PC-3 (cell line): ENCODE measurements at regions of chr10 and their contacts with region 1.

Region 1: DNA sequence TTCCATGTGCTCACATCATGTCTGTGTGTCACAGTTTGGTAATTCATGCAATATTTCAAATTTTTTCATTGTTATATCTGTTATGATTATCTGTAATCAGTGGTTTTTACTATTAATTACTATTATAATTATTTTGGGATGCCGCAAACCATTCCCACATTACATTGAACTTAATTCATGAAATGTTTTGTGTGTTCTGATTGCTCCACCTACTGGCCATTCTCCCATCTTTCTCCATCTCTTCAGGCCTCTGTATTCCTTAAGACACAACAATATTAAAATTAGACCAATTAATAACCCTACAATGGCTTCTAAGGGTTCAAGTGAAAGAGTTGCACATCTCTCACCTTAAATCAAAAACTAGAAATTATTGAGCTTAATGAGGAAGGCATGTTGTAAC is 398.5 kb downstream of the PCDH15 start:
- DNase-seq: peak; percentile 76
- ATAC-seq: peak; percentile 76
- H3K4me3 ChIP-seq: no peak overlapping the region
- H3K27ac ChIP-seq: no peak overlapping the region
- H3K4me1 ChIP-seq: no peaks in the 10 kb centered on the region
- H3K27me3 ChIP-seq: no peaks in the 10 kb centered on the region
- CTCF ChIP-seq: peak; percentile 92

Region 2: DNA sequence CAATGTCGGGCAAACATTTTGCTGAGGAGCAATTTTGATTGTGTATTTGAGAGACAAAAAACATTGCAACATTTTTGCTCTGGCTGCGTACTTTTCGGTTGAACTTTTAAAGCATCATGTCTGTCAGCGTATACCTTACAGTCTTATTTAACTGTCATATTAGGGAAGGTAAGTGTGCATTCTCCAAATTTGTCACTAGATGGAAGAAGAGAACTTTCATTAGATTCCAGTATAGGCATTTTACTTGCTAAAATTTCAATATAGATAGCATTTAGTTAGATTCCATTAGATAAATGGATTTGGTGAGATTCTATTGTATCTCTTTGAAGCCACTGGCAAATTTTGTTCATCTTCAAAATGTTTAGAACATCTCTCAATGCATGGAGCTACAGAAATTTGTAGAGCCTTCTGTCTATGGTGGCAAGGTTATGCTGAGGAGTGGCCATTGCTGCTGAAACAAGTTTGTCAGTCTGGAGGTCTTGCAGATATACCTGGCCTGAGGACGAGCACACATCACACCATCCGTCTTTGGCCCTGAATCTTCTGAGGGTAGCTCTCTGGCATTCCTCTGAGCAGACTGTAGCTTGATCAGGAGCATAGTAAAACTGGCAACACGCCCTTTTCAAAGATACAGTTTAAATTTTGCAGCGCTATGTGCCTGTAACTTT is 1192.5 kb before region 1 on chr10:
- CTCF ChIA-PET with region 1: no interaction called
- POLR2A ChIA-PET with region 1: no interaction called
- intact Hi-C with region 1: loop called (anchors 1 kb)
- DNase-seq: peak; percentile 97
- ATAC-seq: peak; percentile 96
- H3K4me3 ChIP-seq: no peak overlapping the region
- H3K27ac ChIP-seq: no peak overlapping the region
- H3K4me1 ChIP-seq: no peaks in the 10 kb centered on the region
- H3K27me3 ChIP-seq: no peaks in the 10 kb centered on the region
- CTCF ChIP-seq: peak; percentile 99

Region 3: GRCh38 chr10:53839440-53840039 is 563.0 kb before region 1 on chr10:
- CTCF ChIA-PET with region 1: no interaction called
- POLR2A ChIA-PET with region 1: no interaction called
- intact Hi-C with region 1: loop called (anchors 1 kb)
- DNase-seq: peak; percentile 78
- ATAC-seq: no peak
- H3K4me3 ChIP-seq: no peak overlapping the region
- H3K27ac ChIP-seq: no peak overlapping the region
- H3K4me1 ChIP-seq: peaks cover 9% of the 10 kb centered on the region; the same call in 1 of the 2 replicates
- H3K27me3 ChIP-seq: no peaks in the 10 kb centered on the region
- CTCF ChIP-seq: peak; percentile 71

Region 4: DNA sequence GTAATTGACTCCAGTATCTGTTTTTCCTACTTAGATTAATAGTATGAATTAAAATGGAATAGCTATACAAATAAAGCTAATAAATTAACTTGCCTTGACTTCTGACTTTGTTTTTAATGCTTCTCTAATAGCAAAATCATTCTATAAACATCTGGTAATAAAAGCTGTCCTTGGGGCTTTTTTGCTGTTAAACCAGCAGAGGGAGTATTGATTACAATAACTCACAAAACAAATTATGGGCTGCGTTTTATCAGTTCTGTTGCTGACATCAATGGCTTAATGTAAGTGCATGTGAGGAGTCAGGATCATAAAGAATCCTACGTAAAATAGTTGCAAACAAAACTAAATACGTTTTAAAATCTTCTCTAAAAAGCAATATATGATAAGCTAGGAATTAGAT is 269.4 kb before region 1 on chr10:
- CTCF ChIA-PET with region 1: interaction called, 3 read pairs
- POLR2A ChIA-PET with region 1: no interaction called
- intact Hi-C with region 1: loop called (anchors 1 kb)
- DNase-seq: peak; percentile 54
- ATAC-seq: peak; percentile 63
- H3K4me3 ChIP-seq: no peak overlapping the region
- H3K27ac ChIP-seq: no peak overlapping the region
- H3K4me1 ChIP-seq: no peaks in the 10 kb centered on the region
- H3K27me3 ChIP-seq: no peaks in the 10 kb centered on the region
- CTCF ChIP-seq: peak; percentile 91

Region 5: DNA sequence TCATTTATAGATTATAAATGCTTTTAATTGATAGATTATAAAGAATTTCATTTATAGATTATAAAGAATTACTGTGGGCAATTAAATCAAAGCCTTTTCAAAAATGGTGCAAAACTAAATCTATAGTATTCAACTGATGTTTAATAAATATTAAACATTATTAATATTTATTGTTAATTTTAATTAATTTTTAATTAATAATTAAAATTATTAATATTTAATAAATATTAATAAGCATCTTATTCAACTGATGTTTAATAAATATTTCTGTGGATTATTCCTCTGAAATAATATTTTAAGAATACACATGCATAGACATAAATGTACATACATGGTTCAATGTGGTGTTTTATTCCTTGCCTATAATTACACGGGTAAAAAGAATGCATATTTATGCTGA is 51.7 kb after region 1 on chr10:
- CTCF ChIA-PET with region 1: no interaction called
- POLR2A ChIA-PET with region 1: no interaction called
- intact Hi-C with region 1: no loop called
- DNase-seq: no peak
- ATAC-seq: no peak
- H3K4me3 ChIP-seq: no peak overlapping the region
- H3K27ac ChIP-seq: no peak overlapping the region
- H3K4me1 ChIP-seq: no peaks in the 10 kb centered on the region
- H3K27me3 ChIP-seq: no peaks in the 10 kb centered on the region
- CTCF ChIP-seq: no peak

Region 6: DNA sequence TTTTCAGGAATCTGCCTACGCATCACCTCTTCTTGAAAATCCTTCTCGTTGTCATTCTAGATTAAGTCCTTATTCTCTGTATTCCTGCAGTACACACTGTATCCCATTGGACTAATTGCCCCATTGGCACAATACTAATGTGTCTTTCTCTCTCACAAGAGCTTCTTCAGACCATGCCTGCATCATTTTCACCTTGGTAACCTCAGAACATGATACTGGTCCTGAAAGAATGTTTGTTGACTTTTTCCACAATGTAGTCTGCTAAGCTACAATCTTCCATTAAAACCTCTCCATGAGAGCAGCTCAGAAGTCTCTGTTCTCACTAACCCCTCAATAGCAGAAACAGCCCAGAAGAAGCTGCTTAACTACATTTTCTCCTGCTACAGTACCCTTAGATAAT is 127.7 kb after region 1 on chr10:
- CTCF ChIA-PET with region 1: no interaction called
- POLR2A ChIA-PET with region 1: no interaction called
- intact Hi-C with region 1: no loop called
- DNase-seq: no peak
- ATAC-seq: no peak
- H3K4me3 ChIP-seq: no peak overlapping the region
- H3K27ac ChIP-seq: no peak overlapping the region
- H3K4me1 ChIP-seq: no peaks in the 10 kb centered on the region
- H3K27me3 ChIP-seq: no peaks in the 10 kb centered on the region
- CTCF ChIP-seq: no peak

Region 7: GRCh38 chr10:54940418-54940817 is 537.8 kb after region 1 on chr10:
- CTCF ChIA-PET with region 1: no interaction called
- POLR2A ChIA-PET with region 1: no interaction called
- intact Hi-C with region 1: loop called (anchors 5 kb)
- DNase-seq: peak; percentile 17
- ATAC-seq: peak; percentile 82
- H3K4me3 ChIP-seq: no peak overlapping the region
- H3K27ac ChIP-seq: no peak overlapping the region
- H3K4me1 ChIP-seq: no peaks in the 10 kb centered on the region
- H3K27me3 ChIP-seq: no peaks in the 10 kb centered on the region
- CTCF ChIP-seq: peak; percentile 54